ENCODE measurements at regions of chr12 and their contacts with region 1.

Region 1: DNA sequence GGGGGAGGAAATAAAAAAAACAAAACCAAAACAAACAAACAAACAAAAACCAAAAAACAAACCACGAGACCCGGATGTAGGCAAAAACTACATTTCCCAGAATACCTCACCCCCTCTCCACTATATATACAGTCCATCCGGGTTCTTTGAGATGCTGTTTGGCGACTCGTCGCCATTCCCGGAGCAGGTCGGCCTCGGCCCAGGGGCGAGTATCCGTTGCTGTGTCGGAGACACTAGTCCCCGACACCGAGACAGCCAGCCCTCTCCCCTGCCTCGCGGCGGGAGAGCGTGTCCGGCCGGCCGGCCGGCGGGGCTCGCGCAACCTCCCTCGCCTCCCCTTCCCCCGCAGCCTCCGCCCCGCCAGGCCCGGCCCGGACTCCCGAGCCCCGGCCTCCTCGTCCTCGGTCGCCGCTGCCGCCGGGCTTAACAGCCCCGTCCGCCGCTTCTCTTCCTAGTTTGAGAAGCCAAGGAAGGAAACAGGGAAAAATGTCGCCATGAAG is at the start of gene RNF10:
- DNase-seq: peak; percentile 73
- H3K4me3 Mint-ChIP-seq: peak within 1 kb of the TSS; percentile 92
- H3K27ac Mint-ChIP-seq: peak within 1 kb of the TSS; percentile 90
- H3K4me1 Mint-ChIP-seq: peaks cover 44% of the 10 kb centered on the region
- H3K27me3 Mint-ChIP-seq: no peaks in the 10 kb centered on the region
- total RNA-seq, gene RNF10: 177 and 200 TPM in 2 replicates

Region 2: GRCh38 chr12:120437754-120438494 is 96.3 kb before region 1 on chr12 and contains the start of gene COX6A1:
- intact Hi-C with region 1: loop called (anchors 2 kb)
- DNase-seq: peak; percentile 98
- H3K4me3 Mint-ChIP-seq: peak within 1 kb of the TSS; percentile 98
- H3K27ac Mint-ChIP-seq: peak within 1 kb of the TSS; percentile 94
- H3K4me1 Mint-ChIP-seq: peaks cover 17% of the 10 kb centered on the region
- H3K27me3 Mint-ChIP-seq: no peaks in the 10 kb centered on the region
- total RNA-seq, gene COX6A1: 328 and 333 TPM in 2 replicates

Region 3: GRCh38 chr12:120495723-120496412 is 38.4 kb before region 1 on chr12 and contains the start of gene DYNLL1:
- intact Hi-C with region 1: loop called (anchors 2 kb)
- DNase-seq: peak; percentile 96
- H3K4me3 Mint-ChIP-seq: peak within 1 kb of the TSS; percentile 98
- H3K27ac Mint-ChIP-seq: peak within 1 kb of the TSS; percentile 87
- H3K4me1 Mint-ChIP-seq: peaks cover 31% of the 10 kb centered on the region
- H3K27me3 Mint-ChIP-seq: no peaks in the 10 kb centered on the region
- total RNA-seq, gene DYNLL1: 323 and 329 TPM in 2 replicates

Region 4: GRCh38 chr12:120546050-120546386 is 11.8 kb after region 1 on chr12:
- intact Hi-C with region 1: no loop called
- DNase-seq: no peak
- H3K4me3 Mint-ChIP-seq: no peak overlapping the region
- H3K27ac Mint-ChIP-seq: no peak overlapping the region
- H3K4me1 Mint-ChIP-seq: peaks cover 6% of the 10 kb centered on the region
- H3K27me3 Mint-ChIP-seq: no peaks in the 10 kb centered on the region

Measured in activated T-helper 2 cell treated with anti-CD3 and anti-CD28 coated beads, Interferon-gamma antibody, Interleukin-2, Interleukin-4, amounts not matched to agents 10 μg/mL and 5 μg/mL and 100 μg/mL, durations not matched to agents 14 hours and 24 hours and 36 hours (primary cell).